Mucosa of descending colon (tissue), 3 donors: ENCODE measurements at regions of chr12 and their contacts with region 1.

Region 1: DNA sequence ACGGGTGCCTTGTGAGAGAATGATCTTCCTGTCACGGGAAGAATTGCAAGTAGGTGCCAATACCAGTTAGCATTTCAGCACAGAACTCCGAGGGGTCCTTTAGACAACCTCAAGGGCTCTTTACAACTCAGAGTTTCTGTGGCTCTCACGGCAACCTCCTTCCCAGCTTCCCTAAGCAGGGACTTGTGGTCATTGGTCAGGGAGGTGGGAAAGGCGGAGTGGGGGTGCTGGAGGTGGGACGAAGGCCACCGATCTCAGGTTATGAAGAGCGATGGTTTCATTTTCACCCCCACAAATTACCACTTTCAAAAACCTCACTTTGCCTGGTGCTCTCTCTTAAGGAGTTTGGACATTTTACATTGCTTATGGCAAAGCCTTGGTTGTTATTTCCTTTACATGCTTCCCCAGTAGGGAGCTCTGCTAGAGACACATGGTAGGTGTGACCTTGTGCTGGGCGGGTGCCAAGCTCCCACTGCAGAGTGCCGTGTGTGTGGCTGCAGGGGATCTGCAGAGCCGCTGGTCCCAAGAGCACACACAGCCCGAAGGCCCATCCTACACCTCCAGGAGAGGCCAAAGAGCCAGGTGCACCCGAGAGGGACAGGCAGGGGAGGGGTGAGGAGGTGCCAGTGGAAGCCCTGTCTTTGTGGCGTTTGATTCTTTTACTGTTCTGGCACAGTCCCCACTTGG is 21.4 kb downstream of the BCL2L14 start:
- DNase-seq: peak in 2 of 3 donors; percentile 45 to 52
- ATAC-seq: peak; percentile 73
- H3K4me3 ChIP-seq: no peak overlapping the region
- H3K4me1 ChIP-seq: no peaks in the 10 kb centered on the region
- CTCF ChIP-seq: no peak

Region 2: GRCh38 chr12:12327802-12328201 is 235.7 kb after region 1 on chr12:
- intact Hi-C with region 1: loop called in 1 of 2 experiments (anchors 10 kb)
- DNase-seq: peak in 1 of 3 donors; percentile 69
- ATAC-seq: peak; percentile 77
- H3K4me3 ChIP-seq: no peak overlapping the region
- H3K4me1 ChIP-seq: peaks cover 13% of the 10 kb centered on the region
- CTCF ChIP-seq: peak; percentile 18